ENCODE measurements at regions of chr17 and their contacts with region 1.

Region 1: GRCh38 chr17:57408071-57408811 is 151.9 kb downstream of the MSI2 start:
- DNase-seq: peak; percentile 17
- H3K4me3 ChIP-seq: no peak overlapping the region
- H3K27ac ChIP-seq: peak overlapping the region; percentile 76 to 87
- H3K4me1 ChIP-seq: peaks cover 26% of the 10 kb centered on the region
- H3K27me3 ChIP-seq: no peaks in the 10 kb centered on the region
- CTCF ChIP-seq: no peak
- POLR2A ChIP-seq: no peak

Region 2: GRCh38 chr17:57255776-57256681 is 152.2 kb before region 1 on chr17 and contains the start of gene MSI2:
- intact Hi-C with region 1: loop called (anchors 5 kb)
- DNase-seq: peak; percentile 96
- H3K4me3 ChIP-seq: peak within 1 kb of the TSS; percentile 82 to 88
- H3K27ac ChIP-seq: peak within 1 kb of the TSS; percentile 97 to 99
- H3K4me1 ChIP-seq: no peaks in the 10 kb centered on the region
- H3K27me3 ChIP-seq: no peaks in the 10 kb centered on the region
- CTCF ChIP-seq: no peak
- POLR2A ChIP-seq: peak; percentile 63
- total RNA-seq, gene MSI2: 53.1 to 74.0 TPM

Region 3: DNA sequence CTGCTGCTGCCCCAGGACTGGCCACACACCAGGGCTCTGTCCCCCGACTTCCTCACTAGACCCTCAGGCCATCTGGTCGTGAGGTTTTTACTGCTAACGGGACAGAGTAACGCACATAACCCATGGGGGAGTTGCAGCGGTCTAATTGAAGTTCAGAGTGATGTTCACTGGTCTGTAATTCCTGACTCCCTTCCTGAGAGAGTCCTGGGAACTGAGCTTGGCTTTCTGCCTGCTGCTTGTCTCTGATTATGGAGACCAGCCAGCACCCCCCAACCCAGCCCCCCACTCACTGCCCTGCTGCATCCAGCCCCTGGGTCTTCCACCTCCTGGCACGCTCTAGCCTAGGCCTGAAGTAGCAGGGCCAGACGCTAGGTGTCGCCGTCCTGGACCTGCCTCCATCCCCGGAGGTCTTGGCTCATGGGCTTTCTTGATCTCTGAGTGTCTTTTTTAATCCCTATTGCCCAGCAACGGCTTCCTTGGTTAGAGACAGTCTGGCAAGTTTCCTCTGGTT is 143.9 kb after region 1 on chr17:
- intact Hi-C with region 1: loop called (anchors 10 kb)
- DNase-seq: no peak
- H3K4me3 ChIP-seq: no peak overlapping the region
- H3K27ac ChIP-seq: no peak overlapping the region
- H3K4me1 ChIP-seq: peaks cover 4% of the 10 kb centered on the region
- H3K27me3 ChIP-seq: no peaks in the 10 kb centered on the region
- CTCF ChIP-seq: peak in 2 of 4 experiments; percentile 29 to 31
- POLR2A ChIP-seq: no peak

Region 4: DNA sequence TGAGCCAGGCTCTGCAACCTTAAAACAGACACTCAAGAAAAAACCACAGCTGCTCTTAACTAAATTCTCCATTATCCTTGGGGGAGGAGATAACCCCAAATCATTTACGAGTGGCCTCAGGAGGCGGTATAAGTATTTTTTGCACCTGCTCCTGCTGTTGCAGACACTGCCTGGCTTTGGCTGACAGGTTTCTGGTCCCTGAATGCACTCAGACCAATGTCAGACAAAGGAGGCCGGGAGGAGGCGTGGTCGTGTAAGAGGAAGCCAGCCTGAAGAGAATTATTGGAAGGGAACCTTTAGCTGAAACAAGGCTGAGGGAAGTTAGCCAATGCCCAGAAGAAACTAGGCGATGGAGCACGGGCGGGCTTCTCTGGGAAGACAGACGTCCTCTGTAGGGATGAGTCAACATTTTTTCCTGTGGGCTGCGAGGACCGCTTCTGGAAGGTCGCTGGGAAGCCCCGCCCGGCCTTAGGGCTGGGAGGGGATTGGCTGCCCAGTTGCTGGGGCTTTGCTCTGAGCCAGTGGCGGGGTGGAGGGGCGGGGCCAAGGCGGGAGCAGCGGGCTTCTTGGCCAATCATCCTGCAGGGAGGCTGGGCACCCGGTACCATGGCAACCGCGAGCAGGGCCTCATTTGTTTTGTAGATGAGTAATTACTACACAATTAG is 254.5 kb after region 1 on chr17:
- intact Hi-C with region 1: loop called (anchors 10 kb)
- DNase-seq: peak; percentile 76
- H3K4me3 ChIP-seq: peak overlapping the region; percentile 4 to 8
- H3K27ac ChIP-seq: peak overlapping the region; percentile 61 to 67
- H3K4me1 ChIP-seq: no peaks in the 10 kb centered on the region
- H3K27me3 ChIP-seq: no peaks in the 10 kb centered on the region
- CTCF ChIP-seq: peak in 3 of 4 experiments; percentile 13 to 24 (median 17)
- POLR2A ChIP-seq: no peak

Measured in prostate gland (tissue), 2 donors.